CD8-positive, alpha-beta T cell (primary cell): ENCODE measurements at regions of chr5 and their contacts with region 1.

Region 1: DNA sequence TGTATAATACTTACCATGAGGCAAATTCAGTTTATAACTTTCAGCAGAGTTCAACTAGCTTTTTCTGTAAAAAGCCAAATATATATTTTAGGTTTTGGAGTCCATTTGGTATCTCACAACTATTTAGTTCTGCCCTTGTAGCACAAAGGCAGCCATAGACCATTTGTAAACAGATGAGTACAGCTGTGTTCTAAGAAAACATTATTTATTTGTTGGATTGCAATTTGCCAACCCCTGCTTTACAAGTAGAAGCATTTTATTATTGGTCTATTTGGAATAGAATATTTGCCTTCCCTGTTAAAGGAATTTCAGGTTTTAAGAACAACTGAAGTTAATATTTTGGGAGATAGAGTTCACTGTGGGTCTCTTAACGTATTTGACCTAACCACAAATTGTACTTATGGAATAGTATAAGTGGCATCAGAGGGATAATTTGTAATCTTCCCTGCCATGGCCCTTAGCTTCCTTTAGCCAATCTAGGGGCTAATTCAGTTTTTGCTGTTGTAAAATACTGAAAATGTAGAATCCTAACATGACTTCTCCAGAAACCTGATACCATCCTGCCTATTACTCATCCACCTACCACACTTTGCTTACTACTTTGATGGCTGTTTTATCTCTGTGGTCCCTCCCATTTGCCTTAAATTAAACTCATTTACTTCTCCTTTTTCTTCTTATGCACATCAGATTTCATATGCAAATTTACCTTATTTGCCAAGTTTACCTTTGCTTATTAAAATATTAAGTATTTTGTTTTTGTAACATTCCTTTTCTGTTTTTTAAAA is 109.2 kb downstream of the DMXL1 start:
- DNase-seq: no peak
- ATAC-seq: no peak
- H3K4me3 ChIP-seq: no peak overlapping the region
- H3K4me3 Mint-ChIP-seq: no peak overlapping the region
- H3K27ac ChIP-seq: no peak overlapping the region
- H3K27ac Mint-ChIP-seq: no peak overlapping the region
- H3K4me1 ChIP-seq: no peaks in the 10 kb centered on the region
- H3K4me1 Mint-ChIP-seq: peaks cover 1% of the 10 kb centered on the region
- H3K27me3 ChIP-seq: no peaks in the 10 kb centered on the region
- H3K27me3 Mint-ChIP-seq: no peaks in the 10 kb centered on the region
- CTCF ChIP-seq: no peak

Region 2: DNA sequence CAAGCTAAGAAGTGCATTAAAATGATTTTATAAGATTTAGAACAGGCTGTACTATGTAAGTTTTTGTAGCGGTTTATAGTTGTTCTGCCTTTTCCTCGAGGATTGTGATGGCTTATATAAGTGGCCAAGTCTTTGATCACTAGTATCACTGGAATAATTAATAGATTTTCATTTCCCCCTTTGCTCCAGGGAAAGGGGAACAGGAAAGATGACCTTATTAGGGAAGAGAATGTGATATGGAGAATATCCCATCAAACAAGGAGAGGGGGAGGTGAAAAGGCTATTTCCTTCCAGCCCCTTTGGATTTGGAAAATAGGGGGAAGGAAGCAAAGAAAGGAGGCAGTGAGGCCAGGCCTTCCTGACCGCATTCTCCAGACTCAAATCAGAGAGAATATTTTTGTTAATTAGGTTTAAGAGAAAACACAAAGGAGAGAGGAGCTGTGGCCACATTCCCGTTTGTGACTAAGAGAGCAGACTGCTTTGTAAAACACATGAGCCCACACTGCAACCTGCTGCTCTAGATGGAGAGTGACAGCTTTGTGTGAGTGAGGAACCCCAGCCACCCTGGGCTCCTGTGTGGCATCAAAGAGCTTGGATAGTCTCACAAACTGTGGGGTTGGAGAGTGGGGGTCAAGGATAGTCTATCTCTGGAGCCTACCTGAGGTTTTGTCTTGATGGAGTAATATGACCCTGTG is 551.2 kb before region 1 on chr5:
- CTCF ChIA-PET with region 1: no interaction called
- POLR2A ChIA-PET with region 1: no interaction called
- intact Hi-C with region 1: no loop called
- DNase-seq: no peak
- ATAC-seq: no peak
- H3K4me3 ChIP-seq: no peak overlapping the region
- H3K4me3 Mint-ChIP-seq: no peak overlapping the region
- H3K27ac ChIP-seq: no peak overlapping the region
- H3K27ac Mint-ChIP-seq: no peak overlapping the region
- H3K4me1 ChIP-seq: no peaks in the 10 kb centered on the region
- H3K4me1 Mint-ChIP-seq: no peaks in the 10 kb centered on the region
- H3K27me3 ChIP-seq: no peaks in the 10 kb centered on the region
- H3K27me3 Mint-ChIP-seq: no peaks in the 10 kb centered on the region
- CTCF ChIP-seq: no peak

Region 3: DNA sequence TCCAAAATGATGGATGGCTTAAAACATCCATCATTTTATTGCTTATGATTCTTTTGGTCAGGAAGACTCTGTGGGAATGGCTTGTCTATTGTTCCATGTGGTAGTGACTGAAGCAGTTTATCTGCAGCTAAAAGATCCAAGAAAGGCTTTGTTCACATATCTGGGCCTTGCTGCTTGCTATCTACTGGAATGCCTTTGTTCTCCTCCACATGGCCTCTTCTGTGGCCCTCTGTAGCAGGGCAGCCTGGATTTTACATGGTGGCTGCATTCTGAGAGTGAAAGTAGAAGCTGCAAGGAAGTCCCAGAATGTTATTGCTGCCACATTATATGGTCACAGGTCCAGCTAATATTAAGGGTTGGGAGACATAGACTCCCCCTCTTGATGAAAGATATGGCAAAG is 74.1 kb before region 1 on chr5:
- CTCF ChIA-PET with region 1: no interaction called
- POLR2A ChIA-PET with region 1: no interaction called
- intact Hi-C with region 1: loop called in 1 of 2 experiments (anchors 10 kb)
- DNase-seq: no peak
- ATAC-seq: no peak
- H3K4me3 ChIP-seq: no peak overlapping the region
- H3K4me3 Mint-ChIP-seq: no peak overlapping the region
- H3K27ac ChIP-seq: no peak overlapping the region
- H3K27ac Mint-ChIP-seq: no peak overlapping the region
- H3K4me1 ChIP-seq: no peaks in the 10 kb centered on the region
- H3K4me1 Mint-ChIP-seq: no peaks in the 10 kb centered on the region
- H3K27me3 ChIP-seq: no peaks in the 10 kb centered on the region
- H3K27me3 Mint-ChIP-seq: no peaks in the 10 kb centered on the region
- CTCF ChIP-seq: no peak

Region 4: DNA sequence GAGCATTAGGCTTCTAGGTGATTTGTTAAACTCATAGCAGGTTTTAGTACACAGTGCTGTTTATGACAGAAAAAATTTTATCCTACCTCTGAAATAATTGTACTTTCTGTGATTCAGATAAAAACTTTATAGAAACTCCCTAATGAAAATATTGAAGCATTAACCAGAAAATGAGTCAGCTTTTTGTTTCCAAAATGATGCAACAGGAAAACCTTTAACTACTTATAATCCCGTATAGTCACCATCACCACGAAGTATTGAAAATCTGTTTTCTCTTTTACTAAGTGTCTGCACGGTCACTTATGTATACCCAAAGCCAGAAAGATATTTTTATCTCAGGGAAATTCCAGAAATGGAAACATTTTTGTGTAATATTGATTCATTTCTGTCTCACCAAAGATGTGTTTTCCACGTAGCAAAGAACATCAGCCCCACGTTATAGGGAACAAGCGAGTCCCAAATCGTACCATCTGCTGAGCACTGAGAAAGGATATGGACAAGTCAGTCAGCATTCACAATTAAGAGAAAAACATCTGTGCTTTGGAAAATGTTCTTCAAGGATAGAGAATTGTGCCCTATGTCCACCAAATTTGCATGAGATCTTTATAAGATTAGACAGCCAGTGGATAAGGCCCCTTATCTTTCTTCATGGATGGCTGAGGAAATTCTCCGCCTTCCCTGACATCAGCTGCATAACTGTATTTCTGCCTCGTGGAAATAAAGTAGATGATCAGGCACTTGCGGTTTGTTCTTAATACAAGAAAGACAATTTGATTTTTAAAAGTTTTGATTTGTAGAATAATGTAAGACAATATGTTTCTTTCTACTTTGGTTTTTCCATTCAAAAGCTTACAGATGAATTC is 217.7 kb after region 1 on chr5:
- CTCF ChIA-PET with region 1: no interaction called
- POLR2A ChIA-PET with region 1: no interaction called
- intact Hi-C with region 1: no loop called
- DNase-seq: peak in 1 of 9 experiments; percentile 35
- ATAC-seq: peak; percentile 20
- H3K4me3 ChIP-seq: no peak overlapping the region
- H3K4me3 Mint-ChIP-seq: no peak overlapping the region
- H3K27ac ChIP-seq: no peak overlapping the region
- H3K27ac Mint-ChIP-seq: peak overlapping the region; percentile 83
- H3K4me1 ChIP-seq: peaks cover 5% of the 10 kb centered on the region
- H3K4me1 Mint-ChIP-seq: peaks cover 56% of the 10 kb centered on the region
- H3K27me3 ChIP-seq: no peaks in the 10 kb centered on the region
- H3K27me3 Mint-ChIP-seq: no peaks in the 10 kb centered on the region
- CTCF ChIP-seq: no peak

Region 5: DNA sequence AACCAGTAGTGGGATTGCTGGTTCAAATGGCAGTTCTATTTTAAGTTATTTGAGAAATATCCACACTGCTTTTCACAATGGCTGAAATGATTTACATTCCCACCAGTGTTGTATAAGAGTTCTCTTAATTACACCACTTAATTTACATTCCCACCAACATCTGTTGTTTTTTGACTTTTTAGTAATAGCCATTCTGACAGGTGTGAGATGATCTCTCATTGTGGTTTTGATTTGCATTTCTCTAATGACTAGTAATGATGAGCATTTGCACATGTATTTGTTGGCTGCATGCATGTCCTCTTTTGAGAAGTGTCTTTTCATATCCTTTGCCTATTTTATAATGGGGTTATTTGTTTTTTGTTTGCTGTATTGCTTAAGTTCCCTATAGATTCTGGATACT is 1972.4 kb after region 1 on chr5:
- CTCF ChIA-PET with region 1: no interaction called
- POLR2A ChIA-PET with region 1: no interaction called
- intact Hi-C with region 1: no loop called
- DNase-seq: no peak
- ATAC-seq: no peak
- H3K4me3 ChIP-seq: no peak overlapping the region
- H3K4me3 Mint-ChIP-seq: no peak overlapping the region
- H3K27ac ChIP-seq: no peak overlapping the region
- H3K27ac Mint-ChIP-seq: no peak overlapping the region
- H3K4me1 ChIP-seq: no peaks in the 10 kb centered on the region
- H3K4me1 Mint-ChIP-seq: no peaks in the 10 kb centered on the region
- H3K27me3 ChIP-seq: no peaks in the 10 kb centered on the region
- H3K27me3 Mint-ChIP-seq: no peaks in the 10 kb centered on the region
- CTCF ChIP-seq: no peak